ENCODE measurements at regions of chr19 and their contacts with region 1.

Region 1: DNA sequence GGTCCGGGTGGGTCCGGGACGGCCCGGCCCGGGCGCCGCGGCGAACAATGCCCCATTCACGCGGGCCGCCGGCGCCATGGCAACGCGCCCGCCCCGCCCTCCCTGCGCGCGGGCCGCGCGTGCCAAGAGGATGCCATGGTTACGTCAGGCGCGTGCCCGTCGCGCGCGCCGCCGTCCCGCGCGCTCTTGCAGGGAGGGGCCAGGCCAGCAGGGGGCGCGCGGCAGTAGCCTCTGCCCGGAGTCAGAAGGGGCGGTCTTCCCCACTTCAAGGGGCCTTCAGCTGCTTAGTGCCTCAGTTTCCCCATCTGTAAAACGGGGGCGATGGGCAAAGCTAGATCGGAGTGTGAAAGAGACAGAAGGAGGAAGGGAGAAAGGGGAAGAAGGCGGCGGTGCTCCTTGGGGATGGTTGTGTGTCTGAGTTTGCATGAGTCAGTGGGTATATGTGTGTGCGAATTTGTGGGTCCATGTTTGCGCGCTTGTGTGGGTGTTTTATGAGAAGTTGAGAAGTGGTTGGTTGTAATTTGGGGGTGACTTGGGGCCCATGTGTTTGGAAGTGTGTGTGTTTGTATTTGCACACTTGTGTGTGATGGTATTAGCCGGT is 11.6 kb upstream of the NFIX start:
- DNase-seq: peak in 1 of 2 donors; percentile 89
- H3K4me3 ChIP-seq: peak overlapping the region; percentile 26 to 31
- H3K27ac ChIP-seq: no peak overlapping the region
- H3K4me1 ChIP-seq: peaks cover 21% of the 10 kb centered on the region
- H3K27me3 ChIP-seq: no peaks in the 10 kb centered on the region
- CTCF ChIP-seq: peak; percentile 94 to 99 (median 95)
- POLR2A ChIP-seq: no peak

Region 2: GRCh38 chr19:13033819-13034611 is 50.4 kb after region 1 on chr19:
- intact Hi-C with region 1: no loop called
- DNase-seq: no peak
- H3K4me3 ChIP-seq: no peak overlapping the region
- H3K27ac ChIP-seq: peak overlapping the region; percentile 99
- H3K4me1 ChIP-seq: peaks cover 100% of the 10 kb centered on the region
- H3K27me3 ChIP-seq: no peaks in the 10 kb centered on the region
- CTCF ChIP-seq: peak; percentile 32 to 58 (median 46)
- POLR2A ChIP-seq: no peak

Region 3: DNA sequence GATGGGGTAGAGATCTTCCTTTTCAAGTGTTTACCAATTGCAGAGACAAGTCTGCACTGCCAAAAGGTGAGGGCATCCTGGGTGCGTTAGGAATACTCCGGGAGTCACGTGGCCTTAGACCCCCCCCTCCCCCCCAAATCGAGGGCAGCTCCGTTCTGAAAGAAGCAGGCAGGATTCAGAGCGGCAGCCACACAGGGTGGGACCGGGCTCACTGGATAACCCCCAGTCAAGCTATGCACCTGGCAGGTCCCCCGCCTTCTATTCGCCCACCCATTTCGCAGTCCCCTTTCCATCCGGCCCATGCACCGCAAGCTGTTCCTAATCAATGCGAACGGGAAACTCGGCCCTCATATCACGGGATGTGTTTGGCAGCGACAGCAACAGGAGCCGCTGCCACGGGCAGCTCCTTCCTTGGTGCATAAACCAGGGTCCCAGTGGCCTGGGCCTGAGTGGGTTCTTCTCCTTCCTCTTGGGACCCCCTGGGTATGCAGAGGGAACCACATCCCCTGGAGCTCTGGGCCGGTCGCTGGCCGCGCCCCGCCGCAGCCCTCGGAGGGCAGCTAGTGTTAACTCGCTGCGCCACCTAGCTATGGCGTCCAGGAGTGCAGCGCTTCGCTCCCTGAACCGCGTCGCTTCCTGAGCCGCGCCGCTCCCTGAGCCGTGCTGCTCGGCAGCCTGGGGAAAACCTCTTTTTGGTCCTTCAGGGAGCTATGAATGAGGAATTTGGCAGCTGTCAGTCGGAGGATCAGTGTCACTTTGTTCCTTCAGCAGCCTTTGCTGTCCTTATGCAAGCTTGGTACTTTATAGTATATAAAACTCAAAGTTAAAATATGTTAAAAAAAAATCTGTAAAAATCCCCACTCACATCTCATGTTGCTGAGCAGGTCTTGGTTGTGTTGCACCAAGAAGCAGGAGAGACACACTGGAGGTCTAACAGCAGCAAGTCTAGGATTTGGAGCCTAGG is 77.6 kb after region 1 on chr19:
- intact Hi-C with region 1: loop called (anchors 5 kb)
- DNase-seq: no peak
- H3K4me3 ChIP-seq: peak overlapping the region; percentile 36 to 41
- H3K27ac ChIP-seq: peak overlapping the region; percentile 96
- H3K4me1 ChIP-seq: peaks cover 99% of the 10 kb centered on the region
- H3K27me3 ChIP-seq: no peaks in the 10 kb centered on the region
- CTCF ChIP-seq: peak; percentile 95 to 98 (median 97)
- POLR2A ChIP-seq: no peak

Region 4: DNA sequence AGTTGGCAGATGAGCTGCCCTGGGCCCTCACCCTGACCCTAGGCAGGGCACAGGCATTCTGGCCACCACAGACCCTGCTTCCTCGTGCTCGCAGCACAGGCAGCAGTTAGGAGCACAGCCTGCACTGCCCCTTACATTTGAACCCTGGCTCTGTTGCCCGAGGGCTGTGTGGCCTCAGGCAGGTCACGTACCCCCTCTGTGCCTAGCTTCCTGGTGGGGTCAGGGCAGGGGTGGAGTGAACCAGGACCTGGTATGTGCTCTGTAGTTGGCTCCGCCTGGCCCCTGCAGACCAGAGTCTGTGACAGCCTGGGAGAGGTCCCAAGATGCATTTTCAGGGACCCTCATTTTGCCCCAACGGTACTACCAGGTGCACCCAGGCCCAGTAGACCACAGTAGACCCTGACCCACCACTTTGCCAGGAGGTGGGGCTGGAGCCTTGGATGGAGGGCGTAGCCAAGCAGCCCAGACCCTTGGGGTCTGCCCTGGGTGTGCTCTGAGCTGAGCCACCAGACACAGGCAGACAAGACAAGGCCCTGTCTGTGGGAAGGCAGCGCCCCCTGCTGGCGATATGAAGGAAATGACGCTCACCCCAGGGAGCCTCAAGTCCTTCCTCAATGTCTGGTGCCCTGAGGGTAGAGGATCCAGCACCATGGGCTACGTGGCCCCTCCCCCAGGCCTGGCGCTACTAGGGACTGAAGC is 109.9 kb after region 1 on chr19:
- intact Hi-C with region 1: loop called (anchors 5 kb)
- DNase-seq: no peak
- H3K4me3 ChIP-seq: no peak overlapping the region
- H3K27ac ChIP-seq: peak overlapping the region; percentile 90
- H3K4me1 ChIP-seq: peaks cover 87% of the 10 kb centered on the region
- H3K27me3 ChIP-seq: no peaks in the 10 kb centered on the region
- CTCF ChIP-seq: peak; percentile 90 to 97 (median 96)
- POLR2A ChIP-seq: no peak

Measured in vagina (tissue), 2 donors.